Sigmoid colon (tissue), 7 donors: ENCODE measurements at regions of chr7 and their contacts with region 1.

Region 1: DNA sequence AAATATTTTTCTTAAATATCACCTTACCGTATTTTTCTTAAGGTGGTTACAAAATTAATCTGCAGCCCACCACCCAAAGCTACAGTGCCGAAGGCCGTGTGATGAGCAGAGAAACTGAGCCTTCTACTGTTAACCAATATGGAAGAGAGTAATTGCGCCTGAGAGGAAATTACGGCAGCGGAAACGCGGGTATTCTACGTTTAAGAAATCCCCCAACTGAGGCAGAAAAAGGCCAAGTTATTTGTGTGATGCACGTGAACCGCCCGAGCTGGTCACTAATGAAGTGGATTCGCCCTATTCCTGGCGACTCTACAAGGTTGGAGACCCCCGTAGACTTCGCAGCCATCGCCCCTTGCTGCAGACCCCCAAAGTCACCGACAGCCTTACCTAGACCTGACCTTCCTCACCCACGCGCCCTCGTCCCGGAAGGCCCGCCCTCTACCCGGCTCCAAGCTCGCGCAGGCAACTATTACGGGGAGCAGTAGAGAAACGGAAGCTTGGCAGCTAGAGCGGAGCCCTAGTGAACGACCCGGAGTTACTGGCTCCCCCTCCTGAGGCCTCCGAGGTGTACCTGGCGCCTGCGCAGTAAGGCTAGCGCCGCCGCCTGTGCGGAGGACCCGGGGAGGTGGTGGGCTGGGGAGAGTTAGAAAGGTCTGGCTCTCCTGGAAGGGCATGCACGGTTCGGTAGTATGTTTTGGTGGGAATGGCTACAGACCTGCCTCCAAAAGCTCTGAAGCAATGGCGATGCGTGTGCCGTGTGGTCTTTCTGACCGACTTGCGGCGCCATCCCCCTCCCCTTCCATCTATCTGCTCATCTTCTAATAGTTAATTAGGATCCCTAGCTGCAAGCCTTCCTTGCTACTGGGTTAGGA is at the start of gene MRPS33:
- DNase-seq: peak; percentile 98
- H3K4me3 ChIP-seq: peak within 1 kb of the TSS; percentile 53 to 68 (median 64)
- H3K27ac ChIP-seq: peak within 1 kb of the TSS; percentile 88 to 90 (median 89)
- H3K4me1 ChIP-seq: peaks cover 0 to 21% (median 8%) of the 10 kb centered on the region in 4 donors
- H3K27me3 ChIP-seq: no peaks in the 10 kb centered on the region
- CTCF ChIP-seq: no peak
- EP300 ChIP-seq: peak in 1 of 4 donors; percentile 31
- POLR2A ChIP-seq: peak; percentile 63 to 64
- total RNA-seq, gene MRPS33: 14.7 to 32.7 (median 20.9) TPM

Region 2: DNA sequence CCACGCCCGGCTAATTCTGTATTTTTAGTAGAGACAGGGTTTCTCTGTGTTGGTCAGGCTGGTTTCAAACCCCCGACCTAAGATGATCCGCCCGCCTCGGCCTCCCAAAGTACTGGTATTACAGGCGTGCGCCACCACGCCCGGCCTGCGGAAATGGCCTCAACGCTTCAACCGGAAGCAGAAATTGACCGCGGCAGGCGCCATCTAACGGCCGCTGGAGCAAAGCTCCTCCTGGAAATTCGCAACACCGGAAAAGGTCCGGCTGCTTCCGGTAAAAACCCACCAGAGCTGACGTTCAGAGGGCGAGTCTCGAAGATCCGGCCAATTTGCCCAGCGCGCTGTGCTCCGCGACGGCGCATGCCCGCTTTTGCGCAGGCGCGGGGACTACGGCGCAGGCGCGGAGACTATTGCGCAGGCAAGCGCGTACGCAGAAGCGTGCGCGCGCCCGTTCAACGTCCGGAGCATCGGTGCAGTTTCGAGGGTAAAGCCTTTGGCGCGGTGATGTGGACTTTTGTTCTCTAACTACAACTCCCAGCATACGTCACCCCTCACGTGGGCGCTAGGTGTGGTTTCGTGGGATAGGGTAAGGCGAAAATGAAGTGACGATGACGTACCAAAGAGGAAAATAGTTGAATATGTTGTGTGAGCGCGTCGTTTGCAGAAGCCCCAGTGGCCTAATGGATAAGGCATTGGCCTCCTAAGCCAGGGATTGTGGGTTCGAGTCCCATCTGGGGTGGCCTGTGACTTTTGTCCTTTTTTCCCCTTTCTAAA is 1674.5 kb before region 1 on chr7:
- intact Hi-C with region 1: loop called (anchors 5 kb)
- DNase-seq: peak; percentile 100
- H3K4me3 ChIP-seq: peak overlapping the region; percentile 63 to 93 (median 88)
- H3K27ac ChIP-seq: peak overlapping the region; percentile 97 to 100 (median 99)
- H3K4me1 ChIP-seq: peaks cover 0 to 17% (median 10%) of the 10 kb centered on the region in 4 donors
- H3K27me3 ChIP-seq: no peaks in the 10 kb centered on the region
- CTCF ChIP-seq: peak; percentile 39 to 72 (median 64)
- EP300 ChIP-seq: peak in 2 of 4 donors; percentile 16 to 76
- POLR2A ChIP-seq: peak in 1 of 2 donors; percentile 41

Region 3: DNA sequence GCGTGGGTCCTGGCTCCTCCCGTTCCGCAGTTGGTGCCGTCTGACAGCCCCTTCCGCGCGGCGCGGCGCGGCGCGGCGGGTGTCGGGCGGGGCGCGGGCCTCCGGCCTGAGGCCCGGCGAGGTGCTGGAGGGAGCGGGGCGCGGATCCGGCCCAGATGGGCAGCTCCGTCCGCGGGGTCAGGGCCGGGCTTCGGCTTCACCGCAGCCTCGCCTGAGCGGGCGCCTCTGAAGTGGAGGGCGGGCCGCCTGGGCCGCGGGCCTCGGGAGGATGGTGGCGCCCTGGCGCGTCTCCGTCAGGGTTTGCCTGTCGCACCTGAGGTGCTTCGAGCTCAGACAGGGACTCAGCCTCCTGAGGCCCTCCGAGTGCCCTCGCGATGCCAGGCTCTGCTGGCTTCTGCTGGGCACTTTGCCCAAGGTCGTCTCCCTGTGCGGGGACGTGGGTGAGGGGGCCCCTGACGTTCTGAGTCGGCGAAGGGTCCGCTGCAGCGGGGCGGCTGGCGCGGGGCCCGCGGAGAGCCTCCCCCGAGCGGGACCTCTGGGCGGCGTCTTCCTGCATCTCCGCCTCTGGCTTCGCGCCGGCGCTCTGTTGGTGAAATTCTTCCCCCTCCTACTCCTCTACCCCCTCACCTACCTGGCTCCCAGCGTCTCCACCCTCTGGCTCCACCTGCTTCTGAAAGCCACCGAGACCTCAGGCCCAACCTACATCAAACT is 341.5 kb before region 1 on chr7:
- intact Hi-C with region 1: loop called (anchors 5 kb)
- DNase-seq: peak; percentile 70
- H3K4me3 ChIP-seq: peak overlapping the region; percentile 53 to 79 (median 74)
- H3K27ac ChIP-seq: peak overlapping the region; percentile 79 to 87 (median 82)
- H3K4me1 ChIP-seq: peaks cover 0 to 35% (median 29%) of the 10 kb centered on the region in 4 donors
- H3K27me3 ChIP-seq: no peaks in the 10 kb centered on the region
- CTCF ChIP-seq: no peak
- EP300 ChIP-seq: no peak
- POLR2A ChIP-seq: peak in 1 of 2 donors; percentile 35

Region 4: GRCh38 chr7:140810830-140811556 is 203.8 kb before region 1 on chr7:
- intact Hi-C with region 1: loop called (anchors 1 kb)
- DNase-seq: peak; percentile 64
- H3K4me3 ChIP-seq: no peak overlapping the region
- H3K27ac ChIP-seq: no peak overlapping the region
- H3K4me1 ChIP-seq: peaks cover 0 to 14% (median 5%) of the 10 kb centered on the region in 4 donors
- H3K27me3 ChIP-seq: no peaks in the 10 kb centered on the region
- CTCF ChIP-seq: peak; percentile 49 to 72 (median 57)
- EP300 ChIP-seq: no peak
- POLR2A ChIP-seq: no peak

Region 5: GRCh38 chr7:141654551-141654950 is 639.8 kb after region 1 on chr7:
- intact Hi-C with region 1: loop called (anchors 5 kb)
- DNase-seq: no peak
- H3K4me3 ChIP-seq: no peak overlapping the region
- H3K27ac ChIP-seq: no peak overlapping the region
- H3K4me1 ChIP-seq: peaks cover 0 to 14% (median 7%) of the 10 kb centered on the region in 4 donors
- H3K27me3 ChIP-seq: no peaks in the 10 kb centered on the region
- CTCF ChIP-seq: peak in 3 of 4 experiments; percentile 43 to 55 (median 44)
- EP300 ChIP-seq: no peak
- POLR2A ChIP-seq: no peak